Testis (tissue), 5 donors: ENCODE measurements at regions of chr3 and their contacts with region 1.

Region 1: DNA sequence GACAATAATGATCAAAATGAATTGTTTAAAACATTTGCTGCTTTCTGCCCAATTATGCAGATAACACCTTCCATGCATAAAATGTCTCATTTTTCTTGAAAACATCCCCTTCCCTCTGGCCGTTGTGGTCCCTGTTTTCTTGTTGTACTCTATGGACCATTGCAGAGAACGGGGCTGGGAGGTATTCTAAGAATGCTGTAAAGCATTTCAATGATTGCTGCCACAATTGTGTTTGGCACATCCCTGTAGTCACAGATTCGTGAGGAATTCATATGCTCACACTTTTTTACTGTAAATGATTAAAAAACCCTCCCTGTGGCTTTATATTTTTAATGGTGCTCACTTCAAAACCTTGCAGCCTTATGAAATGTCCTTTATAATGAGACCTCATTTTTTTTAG is 207.2 kb upstream of the GBE1 start:
- DNase-seq: no peak
- H3K4me3 ChIP-seq: no peak overlapping the region
- H3K27ac ChIP-seq: no peak overlapping the region
- H3K4me1 ChIP-seq: no peaks in the 10 kb centered on the region
- H3K27me3 ChIP-seq: no peaks in the 10 kb centered on the region
- CTCF ChIP-seq: no peak
- POLR2A ChIP-seq: no peak

Region 2: GRCh38 chr3:81891055-81891895 is 77.4 kb before region 1 on chr3:
- intact Hi-C with region 1: no loop called
- DNase-seq: no peak
- H3K4me3 ChIP-seq: no peak overlapping the region
- H3K27ac ChIP-seq: no peak overlapping the region
- H3K4me1 ChIP-seq: no peaks in the 10 kb centered on the region
- H3K27me3 ChIP-seq: no peaks in the 10 kb centered on the region
- CTCF ChIP-seq: no peak
- POLR2A ChIP-seq: no peak

Region 3: DNA sequence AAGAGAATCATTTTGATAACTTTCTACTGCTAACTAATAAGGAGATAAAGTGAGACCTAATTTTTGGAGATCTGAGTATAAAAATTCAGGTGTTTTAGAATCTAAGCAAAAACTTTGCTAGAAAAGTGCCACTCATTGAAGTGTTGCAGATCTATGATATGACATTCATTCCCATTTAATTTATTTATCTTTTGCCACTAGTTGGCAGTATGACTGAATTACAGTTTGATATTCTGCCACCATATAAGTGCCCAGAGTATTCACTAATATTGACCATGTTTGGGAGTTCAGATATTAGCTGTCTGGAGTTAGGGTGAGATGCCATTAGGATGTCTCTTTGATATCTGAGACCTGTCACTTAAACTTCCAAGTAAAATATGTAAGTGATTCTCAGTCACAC is 44.1 kb after region 1 on chr3:
- intact Hi-C with region 1: loop called (anchors 5 kb)
- DNase-seq: no peak
- H3K4me3 ChIP-seq: no peak overlapping the region
- H3K27ac ChIP-seq: no peak overlapping the region
- H3K4me1 ChIP-seq: no peaks in the 10 kb centered on the region
- H3K27me3 ChIP-seq: no peaks in the 10 kb centered on the region
- CTCF ChIP-seq: peak in 1 of 3 experiments; percentile 33
- POLR2A ChIP-seq: no peak